ENCODE measurements at regions of chr12 and their contacts with region 1.

Region 1: GRCh38 chr12:6302621-6303020 is 7.9 kb upstream of the PLEKHG6 start:
- DNase-seq: no peak
- ATAC-seq: no peak
- H3K4me3 ChIP-seq: no peak overlapping the region
- H3K4me3 Mint-ChIP-seq: no peak overlapping the region
- H3K27ac ChIP-seq: no peak overlapping the region
- H3K27ac Mint-ChIP-seq: no peak overlapping the region
- H3K4me1 ChIP-seq: peaks cover 10 to 12% of the 10 kb centered on the region in 2 donors
- H3K4me1 Mint-ChIP-seq: peaks cover 12% of the 10 kb centered on the region
- H3K27me3 ChIP-seq: peaks cover 0 to 68% (median 16%) of the 10 kb centered on the region in 4 experiments
- H3K27me3 Mint-ChIP-seq: peaks cover 52% of the 10 kb centered on the region
- CTCF ChIP-seq: no peak

Region 2: DNA sequence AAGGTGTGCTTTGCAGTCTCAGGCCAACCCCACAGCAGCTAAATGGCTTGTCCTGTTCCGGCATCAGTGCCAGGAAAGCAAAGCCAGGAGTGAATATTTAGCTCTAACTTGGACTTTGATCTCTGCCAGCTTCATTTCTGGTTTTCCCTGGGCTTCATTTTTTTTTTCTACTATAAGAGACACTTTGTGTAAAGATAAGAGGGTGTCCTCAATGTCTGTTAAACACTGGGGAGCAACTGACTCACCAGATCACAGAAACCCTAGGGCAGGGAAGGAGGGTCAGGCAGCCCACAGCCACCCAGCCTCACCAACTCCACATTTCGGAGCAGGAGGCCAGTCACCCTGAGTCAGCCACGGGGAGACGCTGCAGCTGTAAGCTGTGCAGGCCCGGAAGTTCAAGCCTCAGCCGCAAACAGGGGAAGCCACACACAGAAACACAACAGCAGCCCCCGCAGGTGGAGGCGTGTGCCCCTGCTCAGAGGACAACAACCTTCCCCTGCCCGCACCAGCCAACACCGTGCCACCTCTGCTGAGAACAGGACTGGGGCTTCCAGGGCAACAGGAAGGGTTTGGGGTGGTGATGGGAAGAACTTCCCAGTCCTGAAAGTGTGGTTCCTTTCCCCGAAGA is 32.9 kb after region 1 on chr12:
- CTCF ChIA-PET with region 1: no interaction called
- POLR2A ChIA-PET with region 1: no interaction called
- intact Hi-C with region 1: loop called (anchors 5 kb)
- DNase-seq: peak; percentile 75
- ATAC-seq: peak; percentile 79
- H3K4me3 ChIP-seq: peak overlapping the region in 2 of 5 experiments; percentile 34 to 40
- H3K4me3 Mint-ChIP-seq: peak overlapping the region; percentile 66
- H3K27ac ChIP-seq: no peak overlapping the region
- H3K27ac Mint-ChIP-seq: no peak overlapping the region
- H3K4me1 ChIP-seq: peaks cover 53 to 54% of the 10 kb centered on the region in 2 donors
- H3K4me1 Mint-ChIP-seq: peaks cover 13% of the 10 kb centered on the region
- H3K27me3 ChIP-seq: peaks cover 0 to 96% (median 60%) of the 10 kb centered on the region in 4 experiments
- H3K27me3 Mint-ChIP-seq: peaks cover 55% of the 10 kb centered on the region
- CTCF ChIP-seq: peak; percentile 57

Region 3: DNA sequence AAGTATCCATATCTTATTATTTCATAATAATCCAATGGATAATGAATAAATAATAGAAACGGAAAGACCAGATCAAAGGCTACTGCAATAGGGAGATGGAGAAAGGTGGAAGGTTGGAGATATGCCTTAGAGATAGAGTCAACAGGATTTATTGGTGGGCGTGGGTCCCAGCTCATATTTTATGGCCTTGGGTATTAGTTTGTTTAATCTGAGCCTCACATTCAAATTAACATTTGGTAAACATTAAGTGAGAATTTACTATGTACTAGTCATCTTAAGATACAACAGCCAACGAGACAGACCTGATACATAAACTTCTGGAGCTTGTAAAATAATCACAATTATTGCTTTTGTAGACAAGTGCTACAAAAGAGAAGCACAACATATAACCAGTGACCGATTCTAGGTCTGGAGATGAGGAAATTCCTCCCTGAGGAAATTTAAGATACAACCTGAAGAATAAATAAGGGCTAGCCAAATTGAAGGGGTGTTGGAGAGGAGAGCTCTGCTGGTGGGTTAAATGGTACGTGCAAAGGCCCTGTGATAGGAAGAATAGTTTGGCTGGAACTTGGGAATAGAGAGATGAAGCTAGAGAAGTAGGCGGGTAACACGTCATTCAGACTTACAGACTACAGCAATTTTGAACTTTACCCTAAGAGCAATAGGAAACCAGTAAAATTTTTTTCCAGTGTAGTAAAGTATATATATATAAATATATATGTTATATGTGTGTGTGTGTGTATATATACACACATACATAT is 97.4 kb after region 1 on chr12:
- CTCF ChIA-PET with region 1: no interaction called
- POLR2A ChIA-PET with region 1: no interaction called
- intact Hi-C with region 1: no loop called
- DNase-seq: no peak
- ATAC-seq: no peak
- H3K4me3 ChIP-seq: no peak overlapping the region
- H3K4me3 Mint-ChIP-seq: no peak overlapping the region
- H3K27ac ChIP-seq: no peak overlapping the region
- H3K27ac Mint-ChIP-seq: no peak overlapping the region
- H3K4me1 ChIP-seq: no peaks in the 10 kb centered on the region
- H3K4me1 Mint-ChIP-seq: no peaks in the 10 kb centered on the region
- H3K27me3 ChIP-seq: peaks cover 0 to 6% (median 0%) of the 10 kb centered on the region in 4 experiments
- H3K27me3 Mint-ChIP-seq: peaks cover 41% of the 10 kb centered on the region
- CTCF ChIP-seq: no peak